ENCODE measurements at regions of chr4 and their contacts with region 1.

Region 1: GRCh38 chr4:168995537-168996295 is 14.3 kb downstream of the CBR4 start:
- DNase-seq: no peak
- ATAC-seq: no peak
- H3K4me3 ChIP-seq: no peak overlapping the region
- H3K4me3 Mint-ChIP-seq: no peak overlapping the region
- H3K27ac ChIP-seq: no peak overlapping the region
- H3K27ac Mint-ChIP-seq: peak overlapping the region in 1 of 9 donors; percentile 6
- H3K4me1 ChIP-seq: no peaks in the 10 kb centered on the region
- H3K4me1 Mint-ChIP-seq: peaks cover 0 to 10% (median 5%) of the 10 kb centered on the region in 7 donors
- H3K27me3 ChIP-seq: no peaks in the 10 kb centered on the region
- H3K27me3 Mint-ChIP-seq: no peaks in the 10 kb centered on the region

Region 2: DNA sequence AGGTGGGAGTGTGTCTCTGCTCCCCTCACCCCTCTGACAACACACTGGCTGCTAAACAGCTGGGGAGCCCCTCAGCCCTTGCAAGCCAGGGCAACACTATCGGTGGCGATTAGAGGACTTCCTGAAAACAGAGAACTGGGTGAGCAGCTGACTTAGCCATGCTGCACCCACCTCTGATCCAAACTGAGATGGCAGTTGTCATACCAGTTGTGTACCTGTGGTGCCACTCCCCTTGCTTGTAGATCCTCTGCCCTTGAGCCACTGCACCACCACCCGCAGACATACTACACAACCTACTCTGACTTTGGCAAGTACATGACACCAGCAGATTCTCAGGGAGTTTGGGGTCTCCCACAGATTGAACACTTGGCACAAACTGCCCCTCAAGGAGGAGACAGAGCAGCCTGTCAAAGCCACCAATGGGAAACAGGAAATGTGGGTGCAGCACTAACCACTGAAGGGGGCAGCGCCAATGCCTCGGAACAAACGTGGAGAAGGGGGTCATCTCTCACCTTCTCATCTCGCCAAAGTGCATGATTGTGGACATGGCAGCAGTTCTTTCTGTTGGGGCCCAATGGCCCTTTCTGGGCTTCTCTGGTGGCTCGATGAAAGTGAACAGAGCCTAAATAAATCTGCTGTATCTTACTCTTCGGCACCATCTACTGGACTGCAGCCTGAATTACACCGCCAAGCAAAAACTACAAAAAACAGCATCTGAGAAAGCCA is 496.9 kb after region 1 on chr4:
- CTCF ChIA-PET with region 1: no interaction called
- POLR2A ChIA-PET with region 1: no interaction called
- intact Hi-C with region 1: loop called in 1 of 2 experiments (anchors 1 kb)
- DNase-seq: peak in 6 of 9 donors; percentile 7 to 31 (median 18)
- ATAC-seq: peak; percentile 74
- H3K4me3 ChIP-seq: no peak overlapping the region
- H3K4me3 Mint-ChIP-seq: no peak overlapping the region
- H3K27ac ChIP-seq: no peak overlapping the region
- H3K27ac Mint-ChIP-seq: peak overlapping the region in 2 of 9 donors; percentile 57 to 68
- H3K4me1 ChIP-seq: no peaks in the 10 kb centered on the region
- H3K4me1 Mint-ChIP-seq: peaks cover 0 to 12% (median 4%) of the 10 kb centered on the region in 7 donors
- H3K27me3 ChIP-seq: no peaks in the 10 kb centered on the region
- H3K27me3 Mint-ChIP-seq: no peaks in the 10 kb centered on the region

Region 3: GRCh38 chr4:169566021-169566818 is 570.5 kb after region 1 on chr4:
- CTCF ChIA-PET with region 1: interaction called, 3 read pairs
- POLR2A ChIA-PET with region 1: no interaction called
- intact Hi-C with region 1: loop called in 1 of 2 experiments (anchors 2 kb)
- DNase-seq: peak in 6 of 9 donors; percentile 10 to 50 (median 34)
- ATAC-seq: peak; percentile 66
- H3K4me3 ChIP-seq: no peak overlapping the region
- H3K4me3 Mint-ChIP-seq: no peak overlapping the region
- H3K27ac ChIP-seq: no peak overlapping the region
- H3K27ac Mint-ChIP-seq: peak overlapping the region in 7 of 9 donors; percentile 40 to 84 (median 65)
- H3K4me1 ChIP-seq: no peaks in the 10 kb centered on the region
- H3K4me1 Mint-ChIP-seq: peaks cover 0 to 10% (median 5%) of the 10 kb centered on the region in 7 donors
- H3K27me3 ChIP-seq: no peaks in the 10 kb centered on the region
- H3K27me3 Mint-ChIP-seq: no peaks in the 10 kb centered on the region

Measured in naive thymus-derived CD4-positive, alpha-beta T cell (primary cell).